ENCODE measurements at regions of chr21 and their contacts with region 1.

Region 1: DNA sequence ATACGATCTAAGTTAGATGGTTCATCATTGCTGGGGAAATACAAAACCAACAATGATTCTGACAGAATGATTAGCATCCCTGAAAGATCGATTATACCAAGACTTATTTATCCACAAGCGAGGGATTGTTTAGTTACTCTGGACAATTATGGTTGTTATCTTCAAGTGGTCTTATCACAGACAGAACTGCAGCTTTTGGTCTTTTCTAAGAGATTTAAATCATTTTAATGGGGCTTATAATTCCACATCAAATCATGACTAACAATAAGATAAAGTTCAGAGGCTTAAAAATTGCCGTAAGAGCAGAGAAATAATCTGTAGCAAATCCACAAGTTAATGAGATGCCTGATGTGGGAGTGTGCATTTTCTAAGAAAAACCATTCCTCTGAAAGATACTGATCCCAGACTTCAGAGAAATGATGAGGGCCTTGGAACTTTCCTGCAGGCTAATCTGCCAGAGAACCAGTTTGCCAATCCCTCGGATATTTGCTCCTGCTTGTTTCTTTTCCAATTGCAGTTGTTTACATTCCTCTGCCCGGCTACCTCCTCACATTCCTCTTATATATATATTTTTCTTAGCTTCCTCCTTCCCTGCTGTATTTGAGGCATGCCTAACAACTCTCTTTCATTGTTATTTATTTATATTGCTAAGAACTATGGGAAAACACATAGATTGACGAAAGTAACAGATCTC is 134.8 kb downstream of the BACH1 start:
- DNase-seq: no peak
- H3K4me3 Mint-ChIP-seq: no peak overlapping the region
- H3K27ac Mint-ChIP-seq: no peak overlapping the region
- H3K4me1 Mint-ChIP-seq: peaks cover 26% of the 10 kb centered on the region
- H3K27me3 Mint-ChIP-seq: no peaks in the 10 kb centered on the region

Region 2: GRCh38 chr21:29462479-29462878 is 29.0 kb after region 1 on chr21:
- intact Hi-C with region 1: loop called (anchors 1 kb)
- DNase-seq: no peak
- H3K4me3 Mint-ChIP-seq: no peak overlapping the region
- H3K27ac Mint-ChIP-seq: no peak overlapping the region
- H3K4me1 Mint-ChIP-seq: no peaks in the 10 kb centered on the region
- H3K27me3 Mint-ChIP-seq: no peaks in the 10 kb centered on the region

Measured in activated T-helper 1 cell treated with anti-CD3 and anti-CD28 coated beads, Interleukin-12 subunit alpha, Interleukin-12 subunit beta, Interleukin-2, Interleukin-4 antibody, amounts not matched to agents 30 ng/mL and 10 ng/mL and 1 ng/mL, durations not matched to agents 14 hours and 24 hours and 36 hours (primary cell).